B cell (primary cell): ENCODE measurements at regions of chr14 and their contacts with region 1.

Region 1: GRCh38 chr14:94001501-94002396 is 4.6 kb downstream of the CCDC197 start:
- DNase-seq: peak; percentile 79
- ATAC-seq: peak; percentile 85
- H3K4me3 ChIP-seq: no peak overlapping the region
- H3K4me3 Mint-ChIP-seq: no peak overlapping the region
- H3K27ac ChIP-seq: no peak overlapping the region
- H3K27ac Mint-ChIP-seq: peak overlapping the region; percentile 20
- H3K4me1 ChIP-seq: peaks cover 4 to 6% of the 10 kb centered on the region in 2 donors
- H3K4me1 Mint-ChIP-seq: peaks cover 4% of the 10 kb centered on the region
- H3K27me3 ChIP-seq: peaks cover 0 to 28% (median 9%) of the 10 kb centered on the region in 4 experiments
- H3K27me3 Mint-ChIP-seq: peaks cover 48% of the 10 kb centered on the region
- CTCF ChIP-seq: peak; percentile 99

Region 2: GRCh38 chr14:93591506-93591905 is 410.2 kb before region 1 on chr14:
- CTCF ChIA-PET with region 1: no interaction called
- POLR2A ChIA-PET with region 1: no interaction called
- intact Hi-C with region 1: no loop called
- DNase-seq: no peak
- ATAC-seq: no peak
- H3K4me3 ChIP-seq: no peak overlapping the region
- H3K4me3 Mint-ChIP-seq: no peak overlapping the region
- H3K27ac ChIP-seq: no peak overlapping the region
- H3K27ac Mint-ChIP-seq: no peak overlapping the region
- H3K4me1 ChIP-seq: no peaks in the 10 kb centered on the region
- H3K4me1 Mint-ChIP-seq: no peaks in the 10 kb centered on the region
- H3K27me3 ChIP-seq: no peaks in the 10 kb centered on the region
- H3K27me3 Mint-ChIP-seq: peaks cover 18% of the 10 kb centered on the region
- CTCF ChIP-seq: no peak

Region 3: DNA sequence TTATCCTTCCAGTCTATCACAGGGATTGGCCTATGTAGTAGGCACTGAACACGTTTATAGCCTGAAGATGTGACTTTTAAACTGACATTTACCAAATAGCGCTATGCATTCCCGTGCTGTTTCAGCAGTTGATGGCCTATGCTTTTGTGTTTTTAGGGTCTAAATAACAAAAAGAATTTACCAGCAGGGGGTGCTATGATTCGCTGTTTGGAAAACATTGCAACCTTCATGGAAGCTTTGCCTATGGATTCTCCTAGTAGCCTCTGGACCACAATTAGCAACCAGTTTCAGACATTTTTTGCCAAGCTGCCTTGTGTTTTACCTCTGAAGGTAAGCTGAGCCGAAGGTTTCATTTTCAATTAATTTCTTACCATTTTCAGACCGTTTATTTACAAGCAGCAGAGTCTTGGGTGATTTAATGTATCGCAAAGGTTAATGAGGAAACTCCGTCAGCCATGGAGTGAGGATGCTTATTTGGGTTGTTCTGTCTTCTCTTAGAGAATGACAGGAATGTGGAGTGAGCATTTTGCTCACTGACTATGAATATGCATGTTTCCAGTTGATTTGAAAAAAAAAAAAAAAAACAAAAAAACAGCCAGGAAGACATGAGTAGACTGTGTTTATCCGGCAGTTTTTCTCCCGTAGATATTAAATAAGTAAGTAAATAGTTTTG is 346.5 kb before region 1 on chr14:
- CTCF ChIA-PET with region 1: no interaction called
- POLR2A ChIA-PET with region 1: no interaction called
- intact Hi-C with region 1: loop called (anchors 5 kb)
- DNase-seq: peak; percentile 12
- ATAC-seq: no peak
- H3K4me3 ChIP-seq: no peak overlapping the region
- H3K4me3 Mint-ChIP-seq: no peak overlapping the region
- H3K27ac ChIP-seq: no peak overlapping the region
- H3K27ac Mint-ChIP-seq: no peak overlapping the region
- H3K4me1 ChIP-seq: no peaks in the 10 kb centered on the region
- H3K4me1 Mint-ChIP-seq: no peaks in the 10 kb centered on the region
- H3K27me3 ChIP-seq: peaks cover 0 to 12% (median 5%) of the 10 kb centered on the region in 4 experiments
- H3K27me3 Mint-ChIP-seq: peaks cover 27% of the 10 kb centered on the region
- CTCF ChIP-seq: peak; percentile 56

Region 4: GRCh38 chr14:93880021-93880820 is 121.5 kb before region 1 on chr14:
- CTCF ChIA-PET with region 1: no interaction called
- POLR2A ChIA-PET with region 1: no interaction called
- intact Hi-C with region 1: no loop called
- DNase-seq: no peak
- ATAC-seq: no peak
- H3K4me3 ChIP-seq: no peak overlapping the region
- H3K4me3 Mint-ChIP-seq: no peak overlapping the region
- H3K27ac ChIP-seq: no peak overlapping the region
- H3K27ac Mint-ChIP-seq: no peak overlapping the region
- H3K4me1 ChIP-seq: no peaks in the 10 kb centered on the region
- H3K4me1 Mint-ChIP-seq: no peaks in the 10 kb centered on the region
- H3K27me3 ChIP-seq: peaks cover 0 to 6% (median 0%) of the 10 kb centered on the region in 4 experiments
- H3K27me3 Mint-ChIP-seq: peaks cover 7% of the 10 kb centered on the region
- CTCF ChIP-seq: no peak

Region 5: GRCh38 chr14:93970549-93970946 is 31.2 kb before region 1 on chr14:
- CTCF ChIA-PET with region 1: interaction called, 41 read pairs
- POLR2A ChIA-PET with region 1: interaction called, 6 read pairs
- intact Hi-C with region 1: loop called (anchors 1 kb)
- DNase-seq: peak; percentile 77
- ATAC-seq: peak; percentile 58
- H3K4me3 ChIP-seq: peak overlapping the region; percentile 30 to 78 (median 70)
- H3K4me3 Mint-ChIP-seq: peak overlapping the region; percentile 93
- H3K27ac ChIP-seq: peak overlapping the region; percentile 31 to 44
- H3K27ac Mint-ChIP-seq: peak overlapping the region; percentile 86
- H3K4me1 ChIP-seq: peaks cover 60 to 62% of the 10 kb centered on the region in 2 donors
- H3K4me1 Mint-ChIP-seq: peaks cover 64% of the 10 kb centered on the region
- H3K27me3 ChIP-seq: peaks cover 0 to 19% (median 9%) of the 10 kb centered on the region in 4 experiments
- H3K27me3 Mint-ChIP-seq: peaks cover 15% of the 10 kb centered on the region
- CTCF ChIP-seq: peak; percentile 78

Region 6: GRCh38 chr14:93975791-93976476 is 25.8 kb before region 1 on chr14:
- CTCF ChIA-PET with region 1: interaction called, 41 read pairs
- POLR2A ChIA-PET with region 1: interaction called, 6 read pairs
- intact Hi-C with region 1: no loop called
- DNase-seq: no peak
- ATAC-seq: no peak
- H3K4me3 ChIP-seq: peak overlapping the region in 2 of 5 experiments; percentile 4 to 15
- H3K4me3 Mint-ChIP-seq: peak overlapping the region; percentile 62
- H3K27ac ChIP-seq: no peak overlapping the region
- H3K27ac Mint-ChIP-seq: no peak overlapping the region
- H3K4me1 ChIP-seq: peaks cover 31 to 43% of the 10 kb centered on the region in 2 donors
- H3K4me1 Mint-ChIP-seq: peaks cover 44% of the 10 kb centered on the region
- H3K27me3 ChIP-seq: peaks cover 0 to 43% (median 25%) of the 10 kb centered on the region in 4 experiments
- H3K27me3 Mint-ChIP-seq: peaks cover 37% of the 10 kb centered on the region
- CTCF ChIP-seq: no peak